ENCODE measurements at regions of chr1 and their contacts with region 1.

Region 1: GRCh38 chr1:169601093-169601881 is 15.0 kb upstream of the F5 start:
- H3K4me3 ChIP-seq: no peak overlapping the region
- H3K27ac ChIP-seq: no peak overlapping the region
- H3K4me1 ChIP-seq: no peaks in the 10 kb centered on the region
- CTCF ChIP-seq: no peak; the same call in 1 of the 2 replicates

Region 2: DNA sequence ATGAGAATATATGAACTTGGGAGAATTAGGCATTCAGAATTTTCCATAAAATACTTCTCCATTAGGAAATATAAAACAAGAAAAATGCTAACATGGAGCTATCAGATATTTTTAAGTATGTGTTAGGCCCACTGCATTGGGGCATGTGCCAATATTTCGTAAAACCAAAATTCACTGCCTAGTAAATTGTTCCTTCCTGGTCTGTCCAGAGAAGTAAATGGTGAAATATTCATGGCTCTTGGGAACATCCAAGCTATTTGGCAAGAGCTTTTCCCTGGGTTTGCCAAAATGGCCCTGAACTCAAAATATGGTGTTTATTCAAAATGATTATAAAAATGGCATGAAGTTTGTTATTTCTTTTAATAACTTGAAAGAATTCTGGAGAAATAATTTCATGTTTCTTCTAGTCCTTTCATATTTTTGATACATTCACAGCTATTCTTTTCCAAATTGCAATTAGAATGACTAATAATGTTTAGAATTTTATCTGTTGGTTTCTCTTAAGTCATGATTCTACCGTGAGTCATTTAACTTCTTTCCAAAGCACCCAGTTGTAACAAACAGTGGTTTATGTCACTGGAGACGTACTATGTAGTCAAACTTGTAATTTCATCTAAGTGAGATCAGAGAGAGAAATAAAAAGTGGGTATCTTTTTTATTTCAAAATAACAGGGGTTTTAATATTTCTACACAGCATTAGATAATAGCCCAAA is 89.8 kb before region 1 on chr1:
- CTCF ChIA-PET with region 1: no interaction called
- POLR2A ChIA-PET with region 1: no interaction called
- H3K4me3 ChIP-seq: no peak overlapping the region
- H3K27ac ChIP-seq: no peak overlapping the region
- H3K4me1 ChIP-seq: no peaks in the 10 kb centered on the region
- CTCF ChIP-seq: no peak

Region 3: DNA sequence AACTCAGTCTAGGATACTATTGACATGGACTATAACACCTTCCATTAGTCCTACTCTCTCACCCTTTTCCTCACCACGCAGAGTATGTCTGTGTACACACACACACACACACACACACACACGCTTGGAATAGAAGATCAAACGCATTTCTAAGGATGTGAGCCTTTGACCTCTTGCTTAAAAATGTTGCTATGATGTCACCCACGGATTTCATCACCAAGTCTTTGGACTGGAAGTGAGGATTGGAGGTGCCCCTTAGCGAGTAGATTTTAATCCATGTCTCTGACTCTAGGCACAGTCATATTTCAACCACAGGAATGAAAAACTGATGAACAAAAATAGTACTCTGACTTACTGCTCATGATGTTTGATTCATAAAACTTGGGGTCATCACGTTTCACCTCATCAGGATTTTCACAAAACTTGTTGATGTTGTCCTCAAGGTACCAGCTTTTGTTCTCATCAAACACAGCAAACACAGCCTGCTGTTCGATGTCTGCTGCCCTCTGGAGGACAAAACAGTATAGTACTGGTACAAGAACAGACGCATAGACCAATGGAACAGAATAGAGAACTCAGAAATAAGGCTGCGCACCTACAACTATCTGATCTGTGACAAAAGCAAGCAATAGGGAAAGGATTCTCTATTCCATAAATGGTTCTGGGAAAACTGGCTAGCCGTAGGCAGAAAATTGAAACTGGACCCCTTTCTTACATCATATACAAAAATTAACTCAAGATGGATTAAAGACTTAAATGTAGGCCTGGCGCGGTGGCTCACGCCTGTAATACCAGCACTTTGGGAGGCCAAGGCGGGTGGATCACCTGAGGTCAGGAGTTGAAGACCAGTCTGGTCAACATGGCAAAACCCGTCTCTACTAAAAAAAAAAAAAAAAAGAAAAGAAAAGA is 54.9 kb before region 1 on chr1:
- CTCF ChIA-PET with region 1: interaction called, 10 read pairs
- POLR2A ChIA-PET with region 1: no interaction called
- H3K4me3 ChIP-seq: no peak overlapping the region
- H3K27ac ChIP-seq: no peak overlapping the region
- H3K4me1 ChIP-seq: no peaks in the 10 kb centered on the region
- CTCF ChIP-seq: peak; percentile 38; the same call in 1 of the 2 replicates

Region 4: DNA sequence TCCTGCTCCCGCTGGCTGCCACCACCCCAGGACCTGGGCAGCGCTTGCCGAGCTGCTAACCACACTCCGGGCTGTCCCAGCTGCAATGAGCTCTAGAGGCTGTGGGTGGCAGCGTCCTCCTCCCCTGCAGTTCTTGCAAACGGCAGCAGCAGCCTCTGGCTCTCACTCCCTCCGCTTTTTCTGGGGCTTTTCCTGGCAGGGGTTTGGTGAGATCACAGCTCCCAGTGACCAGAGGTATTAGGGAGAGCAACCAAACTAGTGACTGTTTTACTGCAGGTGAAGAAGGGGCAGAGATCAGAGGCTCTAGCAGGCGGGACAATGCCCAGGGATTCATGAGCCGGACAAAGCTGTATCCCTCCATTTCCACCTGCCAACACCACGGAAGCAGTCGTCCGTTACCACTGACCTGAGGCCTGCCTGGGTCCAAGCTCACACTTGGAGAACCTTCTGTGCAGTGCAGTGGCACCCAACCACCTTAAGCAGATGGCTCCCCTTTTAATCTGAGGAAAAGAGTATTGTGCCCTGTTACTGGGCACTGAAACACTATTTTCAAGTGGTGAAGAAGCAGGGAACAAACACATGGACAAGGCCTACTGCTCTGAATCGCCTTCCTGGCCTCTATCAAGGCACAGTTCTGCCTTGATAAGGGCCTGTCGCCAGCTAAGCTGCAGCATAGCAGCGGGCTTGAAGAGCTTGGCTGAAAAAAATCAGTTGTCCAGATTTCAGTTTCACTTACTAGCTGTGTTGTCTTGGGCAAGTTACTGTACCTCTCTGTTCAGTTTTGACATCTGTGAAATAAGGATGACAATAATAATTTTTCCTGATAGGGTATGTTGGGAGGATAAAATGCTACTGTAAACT is 14.7 kb before region 1 on chr1 and contains the start of gene F5:
- CTCF ChIA-PET with region 1: interaction called, 10 read pairs
- POLR2A ChIA-PET with region 1: no interaction called
- H3K4me3 ChIP-seq: peak within 1 kb of the TSS; percentile 3
- H3K27ac ChIP-seq: no peak within 1 kb of the TSS
- H3K4me1 ChIP-seq: no peaks in the 10 kb centered on the region
- CTCF ChIP-seq: peak; percentile 75

Region 5: GRCh38 chr1:169704797-169705196 is 103.5 kb after region 1 on chr1:
- CTCF ChIA-PET with region 1: interaction called, 12 read pairs
- POLR2A ChIA-PET with region 1: no interaction called
- H3K4me3 ChIP-seq: no peak overlapping the region
- H3K27ac ChIP-seq: no peak overlapping the region
- H3K4me1 ChIP-seq: no peaks in the 10 kb centered on the region
- CTCF ChIP-seq: no peak

Region 6: DNA sequence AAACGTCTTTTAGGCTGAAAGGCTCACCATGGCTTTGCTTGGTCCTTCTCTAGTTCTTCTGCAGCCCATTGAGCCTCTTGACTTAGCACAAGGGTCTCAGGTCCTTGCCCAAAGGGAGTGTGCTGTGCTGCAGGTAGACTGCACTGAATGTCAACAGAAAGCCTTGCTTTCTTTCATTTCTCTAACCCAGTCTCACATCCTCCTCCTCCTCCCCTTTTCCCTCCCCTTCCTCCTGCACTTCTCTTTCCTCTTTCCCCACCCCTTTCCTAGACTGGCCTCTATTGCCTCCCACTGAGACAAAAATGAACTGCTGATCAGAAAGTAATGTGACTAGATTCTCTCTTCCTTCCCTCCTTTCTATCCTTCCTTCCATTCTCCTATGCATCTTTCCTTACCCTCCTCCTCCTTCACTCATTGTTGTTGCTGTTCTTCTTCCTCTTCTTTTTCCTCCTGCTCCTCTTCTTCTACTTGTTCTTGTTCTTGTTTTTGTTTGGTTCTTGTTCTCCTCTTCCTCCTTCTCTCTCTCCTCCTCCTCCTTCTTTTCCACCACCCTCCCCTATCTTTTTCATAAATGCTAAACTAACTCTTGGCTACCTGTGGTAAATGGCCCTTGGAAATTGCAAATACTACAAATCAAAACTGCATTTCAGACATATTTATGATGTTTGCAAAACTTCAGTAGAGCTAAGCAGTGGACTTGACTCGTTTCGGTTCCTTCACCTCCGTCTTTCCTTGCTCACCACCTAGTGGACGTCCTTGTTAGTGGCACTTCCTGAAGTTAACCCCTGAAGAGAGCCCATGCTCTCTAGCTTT is 110.4 kb after region 1 on chr1 and contains the start of gene SELL:
- CTCF ChIA-PET with region 1: interaction called, 50 read pairs
- POLR2A ChIA-PET with region 1: no interaction called
- H3K4me3 ChIP-seq: peak within 1 kb of the TSS; percentile 26
- H3K27ac ChIP-seq: no peak within 1 kb of the TSS
- H3K4me1 ChIP-seq: no peaks in the 10 kb centered on the region
- CTCF ChIP-seq: peak; percentile 42

Region 7: DNA sequence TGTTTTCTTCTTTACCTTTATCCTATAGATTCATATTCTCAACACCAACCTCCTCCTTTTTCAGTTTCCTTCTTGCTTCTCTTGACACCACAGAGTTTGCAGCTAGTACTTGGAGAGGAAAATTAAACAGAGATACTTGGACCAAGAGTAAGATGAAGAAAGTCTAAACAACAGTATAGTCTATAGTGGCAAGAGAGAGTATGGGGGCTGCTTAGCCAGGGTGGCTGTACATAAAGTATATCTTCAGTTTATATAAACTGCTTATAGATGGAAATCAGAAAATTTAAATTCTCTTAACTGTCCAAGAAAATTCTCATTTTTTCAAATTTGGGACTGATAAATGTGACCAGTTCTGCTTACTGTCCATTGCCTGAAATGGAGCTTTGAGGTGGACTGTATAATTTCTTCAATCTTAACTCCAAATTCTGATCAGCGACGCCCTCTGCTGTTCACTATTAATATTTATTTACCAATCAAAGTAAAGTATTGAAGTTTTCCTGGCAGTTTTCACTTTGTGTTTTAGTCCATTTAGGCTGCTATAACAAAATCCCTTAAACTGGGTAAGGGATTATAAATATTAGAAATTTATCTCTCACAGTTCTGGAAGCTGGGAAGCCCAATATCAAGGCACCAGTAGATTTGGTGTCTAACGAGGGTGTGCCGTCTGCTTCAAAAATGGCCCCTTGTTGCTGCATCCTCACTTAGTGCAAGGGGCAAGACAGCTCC is 208.2 kb after region 1 on chr1:
- CTCF ChIA-PET with region 1: interaction called, 29 read pairs
- POLR2A ChIA-PET with region 1: no interaction called
- H3K4me3 ChIP-seq: no peak overlapping the region
- H3K27ac ChIP-seq: no peak overlapping the region
- H3K4me1 ChIP-seq: no peaks in the 10 kb centered on the region
- CTCF ChIP-seq: no peak